Activated CD4-positive, alpha-beta memory T cell treated with anti-CD3 and anti-CD28 coated beads for 36 hours (primary cell): ENCODE measurements at regions of chr10 and their contacts with region 1.

Region 1: DNA sequence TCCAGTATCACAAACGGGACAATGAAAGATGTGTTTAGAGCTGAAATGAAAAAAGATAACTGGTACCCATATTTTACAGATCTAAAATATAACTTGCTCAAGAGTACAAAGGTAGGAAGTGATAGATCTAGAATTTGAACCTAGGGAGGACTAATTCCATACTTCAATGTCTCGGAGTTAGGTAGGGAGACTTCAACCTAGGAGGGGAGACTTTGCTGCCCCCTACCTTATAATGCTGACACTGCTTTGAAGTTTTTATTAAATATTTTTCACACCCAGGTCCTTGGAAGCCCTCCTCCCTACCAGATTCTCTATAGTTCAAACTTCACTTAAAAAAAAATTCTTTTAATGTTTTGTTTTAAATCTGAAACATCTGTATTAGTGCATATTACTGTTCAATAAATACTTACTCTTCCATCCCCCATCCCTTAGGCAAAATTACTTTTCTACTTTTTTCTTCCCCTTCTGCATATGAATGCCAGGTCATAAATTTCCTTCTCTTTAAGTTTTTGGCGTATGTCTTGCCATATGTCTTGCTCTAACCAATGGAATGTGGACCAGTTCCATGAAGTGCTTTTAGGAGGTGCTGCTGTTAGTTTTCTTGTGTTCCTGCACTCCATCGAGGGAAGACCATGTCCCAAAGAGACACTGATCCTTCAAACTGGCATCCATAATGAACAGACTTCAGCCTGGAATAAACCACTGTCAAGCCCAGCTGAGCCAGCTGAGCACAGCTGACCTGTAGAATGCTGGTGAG is 57.8 kb downstream of the MICU1 start:
- DNase-seq: no peak
- H3K4me3 Mint-ChIP-seq: no peak overlapping the region
- H3K27ac Mint-ChIP-seq: no peak overlapping the region
- H3K4me1 Mint-ChIP-seq: peaks cover 16% of the 10 kb centered on the region
- H3K27me3 Mint-ChIP-seq: no peaks in the 10 kb centered on the region

Region 2: DNA sequence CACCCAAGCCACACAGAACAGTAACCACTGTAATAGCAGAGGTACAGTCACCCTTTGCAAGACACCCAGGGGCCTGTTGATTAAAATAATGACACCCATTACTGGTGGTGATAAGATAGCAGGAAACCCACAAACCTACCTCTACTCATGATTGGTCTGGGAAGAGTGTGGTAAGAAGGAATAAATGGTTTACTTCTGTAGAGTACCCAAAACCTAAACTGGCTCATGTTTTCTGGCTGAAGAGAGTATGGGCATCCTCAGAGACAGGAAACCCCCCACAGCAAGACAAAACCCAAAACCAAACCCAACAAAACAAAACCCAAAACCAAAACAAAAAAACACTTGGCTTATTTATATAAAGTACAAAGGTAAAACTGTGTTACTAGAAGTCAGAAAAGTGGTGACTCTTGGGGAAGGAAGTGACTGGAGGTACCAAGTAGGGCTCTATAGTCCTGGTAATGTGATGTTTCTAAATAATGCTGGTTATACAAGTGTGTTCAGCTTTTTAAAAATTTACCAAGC is 197.8 kb before region 1 on chr10:
- CTCF ChIA-PET with region 1: interaction called, 3 read pairs
- POLR2A ChIA-PET with region 1: no interaction called
- intact Hi-C with region 1: loop called (anchors 2 kb)
- DNase-seq: no peak
- H3K4me3 Mint-ChIP-seq: no peak overlapping the region
- H3K27ac Mint-ChIP-seq: peak overlapping the region; percentile 60
- H3K4me1 Mint-ChIP-seq: peaks cover 14% of the 10 kb centered on the region
- H3K27me3 Mint-ChIP-seq: no peaks in the 10 kb centered on the region

Region 3: GRCh38 chr10:72625608-72626443 is 57.8 kb after region 1 on chr10 and contains the start of gene MICU1:
- CTCF ChIA-PET with region 1: interaction called, 3 read pairs
- POLR2A ChIA-PET with region 1: interaction called, 4 read pairs
- intact Hi-C with region 1: loop called (anchors 1 kb)
- DNase-seq: peak; percentile 97
- H3K4me3 Mint-ChIP-seq: peak within 1 kb of the TSS; percentile 97
- H3K27ac Mint-ChIP-seq: peak within 1 kb of the TSS; percentile 86
- H3K4me1 Mint-ChIP-seq: peaks cover 10% of the 10 kb centered on the region
- H3K27me3 Mint-ChIP-seq: no peaks in the 10 kb centered on the region
- total RNA-seq, gene MICU1: 41.2 to 41.7 TPM